ENCODE measurements at regions of chr17 and their contacts with region 1.

Region 1: GRCh38 chr17:67376737-67377487 is at the start of gene PITPNC1:
- DNase-seq: peak; percentile 79 to 89 (median 88)
- ATAC-seq: peak; percentile 82
- H3K4me3 ChIP-seq: peak within 1 kb of the TSS; percentile 92
- H3K4me3 Mint-ChIP-seq: peak within 1 kb of the TSS; percentile 86 to 99 (median 93)
- H3K27ac ChIP-seq: peak within 1 kb of the TSS; percentile 86
- H3K27ac Mint-ChIP-seq: peak within 1 kb of the TSS; percentile 84 to 98 (median 92)
- H3K4me1 ChIP-seq: peaks cover 17 to 33% of the 10 kb centered on the region in 2 donors
- H3K4me1 Mint-ChIP-seq: peaks cover 26 to 49% (median 38%) of the 10 kb centered on the region in 7 donors
- H3K27me3 ChIP-seq: no peaks in the 10 kb centered on the region
- H3K27me3 Mint-ChIP-seq: no peaks in the 10 kb centered on the region
- total RNA-seq, gene PITPNC1: 53.1 to 108 (median 99.6) TPM

Region 2: DNA sequence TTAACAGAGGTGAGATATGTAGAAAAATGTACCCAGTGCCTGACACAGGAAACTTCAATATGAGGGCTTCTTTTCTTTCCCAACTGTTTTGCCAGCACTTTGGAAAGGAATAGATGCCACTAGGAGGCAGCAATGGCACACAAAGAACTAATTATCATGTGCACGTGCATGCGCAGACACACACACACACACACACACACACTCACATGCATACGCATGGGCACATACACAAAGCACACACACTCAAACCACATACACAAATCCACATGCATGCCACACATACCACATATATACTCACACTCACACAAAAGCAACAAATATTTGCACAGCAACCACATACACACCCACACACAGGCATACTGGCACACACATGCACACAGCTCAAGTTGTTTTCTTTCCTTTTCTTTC is 1176.2 kb before region 1 on chr17:
- CTCF ChIA-PET with region 1: no interaction called
- POLR2A ChIA-PET with region 1: no interaction called
- intact Hi-C with region 1: loop called in 1 of 2 experiments (anchors 10 kb)
- DNase-seq: peak in 7 of 9 donors; percentile 20 to 57 (median 55)
- ATAC-seq: peak; percentile 66
- H3K4me3 ChIP-seq: no peak overlapping the region
- H3K4me3 Mint-ChIP-seq: peak overlapping the region in 6 of 10 donors; percentile 21 to 66 (median 44)
- H3K27ac ChIP-seq: no peak overlapping the region
- H3K27ac Mint-ChIP-seq: peak overlapping the region in 8 of 9 donors; percentile 25 to 89 (median 69)
- H3K4me1 ChIP-seq: peaks cover 0 to 17% of the 10 kb centered on the region in 2 donors
- H3K4me1 Mint-ChIP-seq: peaks cover 12 to 26% (median 21%) of the 10 kb centered on the region in 7 donors
- H3K27me3 ChIP-seq: no peaks in the 10 kb centered on the region
- H3K27me3 Mint-ChIP-seq: peaks cover 0 to 4% (median 0%) of the 10 kb centered on the region in 5 donors

Region 3: DNA sequence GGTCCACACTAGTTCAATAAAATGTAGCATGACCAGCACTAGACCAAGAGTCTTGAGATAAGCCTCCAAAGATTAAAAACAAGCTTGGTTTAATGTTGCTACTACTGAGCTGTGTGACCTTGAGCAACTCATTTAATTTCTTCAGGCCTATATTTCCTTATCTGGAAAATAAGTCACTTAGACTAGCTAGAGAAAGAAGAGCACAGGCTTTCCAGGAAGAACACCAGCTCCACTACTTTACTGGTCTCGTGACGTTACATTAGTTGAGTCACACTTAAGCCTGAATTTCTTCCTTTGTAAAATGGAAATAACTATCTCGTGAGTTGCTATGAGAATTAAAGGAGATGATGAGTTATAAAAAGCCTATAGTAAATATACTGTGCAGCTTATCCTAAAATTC is 137.3 kb before region 1 on chr17:
- CTCF ChIA-PET with region 1: no interaction called
- POLR2A ChIA-PET with region 1: no interaction called
- intact Hi-C with region 1: no loop called
- DNase-seq: no peak
- ATAC-seq: no peak
- H3K4me3 ChIP-seq: no peak overlapping the region
- H3K4me3 Mint-ChIP-seq: peak overlapping the region in 3 of 10 donors; percentile 4 to 52 (median 9)
- H3K27ac ChIP-seq: no peak overlapping the region
- H3K27ac Mint-ChIP-seq: peak overlapping the region in 3 of 9 donors; percentile 1 to 58 (median 51)
- H3K4me1 ChIP-seq: peaks cover 7 to 35% of the 10 kb centered on the region in 2 donors
- H3K4me1 Mint-ChIP-seq: peaks cover 51 to 70% (median 61%) of the 10 kb centered on the region in 7 donors
- H3K27me3 ChIP-seq: no peaks in the 10 kb centered on the region
- H3K27me3 Mint-ChIP-seq: no peaks in the 10 kb centered on the region

Region 4: DNA sequence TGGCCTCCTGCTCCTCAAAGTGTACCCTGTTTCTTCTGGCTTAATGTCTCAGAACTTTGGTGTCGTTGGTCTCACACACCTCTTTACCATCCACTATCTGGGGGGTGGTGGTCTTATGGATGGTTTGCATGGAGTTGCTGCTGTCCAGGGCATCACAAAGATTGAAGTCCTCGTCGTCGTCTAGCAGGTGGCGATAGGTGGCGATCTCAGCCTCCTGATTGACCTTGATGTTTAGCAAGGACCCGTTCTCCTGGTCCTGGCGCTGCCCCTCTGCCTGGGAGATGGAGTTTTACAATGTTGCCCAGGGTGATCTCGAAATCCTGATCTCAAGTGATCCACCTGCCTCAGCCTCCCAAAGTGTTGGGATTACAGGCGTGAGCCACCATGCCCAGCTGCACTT is 100.8 kb before region 1 on chr17:
- CTCF ChIA-PET with region 1: no interaction called
- POLR2A ChIA-PET with region 1: no interaction called
- intact Hi-C with region 1: no loop called
- DNase-seq: no peak
- ATAC-seq: no peak
- H3K4me3 ChIP-seq: no peak overlapping the region
- H3K4me3 Mint-ChIP-seq: no peak overlapping the region
- H3K27ac ChIP-seq: no peak overlapping the region
- H3K27ac Mint-ChIP-seq: no peak overlapping the region
- H3K4me1 ChIP-seq: no peaks in the 10 kb centered on the region
- H3K4me1 Mint-ChIP-seq: no peaks in the 10 kb centered on the region
- H3K27me3 ChIP-seq: no peaks in the 10 kb centered on the region
- H3K27me3 Mint-ChIP-seq: no peaks in the 10 kb centered on the region

Region 5: GRCh38 chr17:67400193-67400592 is 23.3 kb after region 1 on chr17:
- CTCF ChIA-PET with region 1: interaction called, 4 read pairs
- POLR2A ChIA-PET with region 1: interaction called, 4 read pairs
- intact Hi-C with region 1: loop called in 1 of 2 experiments (anchors 1 kb)
- DNase-seq: peak in 6 of 9 donors; percentile 64 to 80 (median 76)
- ATAC-seq: peak; percentile 62
- H3K4me3 ChIP-seq: peak overlapping the region; percentile 32
- H3K4me3 Mint-ChIP-seq: peak overlapping the region; percentile 66 to 93 (median 83)
- H3K27ac ChIP-seq: peak overlapping the region; percentile 83
- H3K27ac Mint-ChIP-seq: peak overlapping the region; percentile 82 to 100 (median 99)
- H3K4me1 ChIP-seq: peaks cover 9 to 77% of the 10 kb centered on the region in 2 donors
- H3K4me1 Mint-ChIP-seq: peaks cover 32 to 88% (median 77%) of the 10 kb centered on the region in 7 donors
- H3K27me3 ChIP-seq: no peaks in the 10 kb centered on the region
- H3K27me3 Mint-ChIP-seq: no peaks in the 10 kb centered on the region

Region 6: DNA sequence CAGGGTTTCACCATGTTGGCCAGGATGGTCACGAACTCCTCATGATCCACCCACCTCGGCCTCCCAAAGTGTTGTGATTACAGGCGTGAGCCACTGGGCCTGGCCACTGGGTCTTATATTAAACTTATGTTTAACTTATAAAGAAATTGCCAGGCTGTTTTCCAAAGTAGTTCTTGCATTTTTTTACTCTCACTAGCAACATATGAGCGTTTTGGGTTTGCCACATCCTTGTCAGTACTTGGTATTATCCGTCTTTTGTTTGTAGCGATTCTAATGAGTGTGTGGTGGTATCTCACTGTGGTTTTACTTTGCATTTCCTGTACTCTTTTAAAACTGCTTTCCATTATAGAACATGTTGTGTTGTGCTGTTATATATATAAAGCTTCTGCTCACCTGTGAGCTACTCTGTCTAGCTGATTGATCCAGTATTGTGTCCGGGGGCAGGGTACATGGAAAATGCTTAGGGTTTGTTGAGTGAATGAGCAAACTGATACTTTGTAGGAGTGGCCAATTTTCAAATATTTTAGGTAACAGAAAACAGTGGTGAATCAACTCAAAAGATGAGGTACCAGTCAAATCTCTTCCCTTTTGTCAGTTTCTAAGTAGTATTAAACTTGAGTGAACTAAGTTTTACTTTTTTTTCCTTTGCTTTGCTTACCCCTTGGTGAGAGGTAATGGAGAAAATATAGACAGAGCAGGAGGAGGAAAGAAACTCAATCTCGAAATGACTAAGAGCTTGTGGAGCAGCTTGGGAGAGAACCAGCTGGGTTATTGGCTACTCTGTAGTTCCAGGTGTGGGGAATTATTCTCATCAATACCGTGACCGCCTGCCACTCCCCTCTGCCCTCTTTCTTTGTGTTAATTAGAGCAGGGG is 76.0 kb after region 1 on chr17:
- CTCF ChIA-PET with region 1: interaction called, 4 read pairs
- POLR2A ChIA-PET with region 1: interaction called, 23 read pairs
- intact Hi-C with region 1: no loop called
- DNase-seq: peak in 8 of 9 donors; percentile 36 to 86 (median 78)
- ATAC-seq: peak; percentile 93
- H3K4me3 ChIP-seq: peak overlapping the region; percentile 7
- H3K4me3 Mint-ChIP-seq: peak overlapping the region; percentile 17 to 88 (median 78)
- H3K27ac ChIP-seq: peak overlapping the region; percentile 69
- H3K27ac Mint-ChIP-seq: peak overlapping the region; percentile 84 to 100 (median 96)
- H3K4me1 ChIP-seq: peaks cover 77% of the 10 kb centered on the region in 2 donors
- H3K4me1 Mint-ChIP-seq: peaks cover 63 to 100% (median 92%) of the 10 kb centered on the region in 7 donors
- H3K27me3 ChIP-seq: no peaks in the 10 kb centered on the region
- H3K27me3 Mint-ChIP-seq: no peaks in the 10 kb centered on the region

Region 7: GRCh38 chr17:67481808-67482207 is 104.9 kb after region 1 on chr17:
- CTCF ChIA-PET with region 1: interaction called, 180 read pairs
- POLR2A ChIA-PET with region 1: interaction called, 176 read pairs
- intact Hi-C with region 1: no loop called
- DNase-seq: no peak
- ATAC-seq: no peak
- H3K4me3 ChIP-seq: no peak overlapping the region
- H3K4me3 Mint-ChIP-seq: peak overlapping the region in 4 of 10 donors; percentile 5 to 54 (median 32)
- H3K27ac ChIP-seq: no peak overlapping the region
- H3K27ac Mint-ChIP-seq: peak overlapping the region in 5 of 9 donors; percentile 16 to 90 (median 68)
- H3K4me1 ChIP-seq: peaks cover 28 to 46% of the 10 kb centered on the region in 2 donors
- H3K4me1 Mint-ChIP-seq: peaks cover 51 to 95% (median 79%) of the 10 kb centered on the region in 7 donors
- H3K27me3 ChIP-seq: no peaks in the 10 kb centered on the region
- H3K27me3 Mint-ChIP-seq: no peaks in the 10 kb centered on the region

Region 8: GRCh38 chr17:67717624-67718329 is 340.9 kb after region 1 on chr17 and contains the start of gene NOL11:
- CTCF ChIA-PET with region 1: interaction called, 3 read pairs
- POLR2A ChIA-PET with region 1: interaction called, 6 read pairs
- intact Hi-C with region 1: loop called (anchors 1 to 2 kb)
- DNase-seq: peak; percentile 97 to 100 (median 99)
- ATAC-seq: peak; percentile 98
- H3K4me3 ChIP-seq: peak within 1 kb of the TSS; percentile 96
- H3K4me3 Mint-ChIP-seq: peak within 1 kb of the TSS; percentile 95 to 100 (median 100)
- H3K27ac ChIP-seq: peak within 1 kb of the TSS; percentile 95
- H3K27ac Mint-ChIP-seq: peak within 1 kb of the TSS; percentile 96 to 100 (median 99)
- H3K4me1 ChIP-seq: peaks cover 14 to 20% of the 10 kb centered on the region in 2 donors
- H3K4me1 Mint-ChIP-seq: peaks cover 7 to 47% (median 28%) of the 10 kb centered on the region in 7 donors
- H3K27me3 ChIP-seq: no peaks in the 10 kb centered on the region
- H3K27me3 Mint-ChIP-seq: peaks cover 0 to 5% (median 0%) of the 10 kb centered on the region in 5 donors
- total RNA-seq, gene NOL11: 50.0 to 72.9 (median 65.1) TPM

Region 9: GRCh38 chr17:68512247-68512982 is 1135.5 kb after region 1 on chr17 and contains the start of gene PRKAR1A:
- CTCF ChIA-PET with region 1: no interaction called
- POLR2A ChIA-PET with region 1: no interaction called
- intact Hi-C with region 1: loop called in 1 of 2 experiments (anchors 5 kb)
- DNase-seq: peak; percentile 84 to 96 (median 94)
- ATAC-seq: peak; percentile 92
- H3K4me3 ChIP-seq: peak within 1 kb of the TSS; percentile 97
- H3K4me3 Mint-ChIP-seq: peak within 1 kb of the TSS; percentile 89 to 100 (median 100)
- H3K27ac ChIP-seq: peak within 1 kb of the TSS; percentile 98
- H3K27ac Mint-ChIP-seq: peak within 1 kb of the TSS; percentile 91 to 100 (median 100)
- H3K4me1 ChIP-seq: peaks cover 13 to 22% of the 10 kb centered on the region in 2 donors
- H3K4me1 Mint-ChIP-seq: peaks cover 34 to 74% (median 51%) of the 10 kb centered on the region in 7 donors
- H3K27me3 ChIP-seq: no peaks in the 10 kb centered on the region
- H3K27me3 Mint-ChIP-seq: no peaks in the 10 kb centered on the region
- total RNA-seq, gene PRKAR1A: 115 to 224 (median 156) TPM

Measured in naive thymus-derived CD4-positive, alpha-beta T cell (primary cell).